ENCODE measurements at regions of chr14 and their contacts with region 1.

Region 1: DNA sequence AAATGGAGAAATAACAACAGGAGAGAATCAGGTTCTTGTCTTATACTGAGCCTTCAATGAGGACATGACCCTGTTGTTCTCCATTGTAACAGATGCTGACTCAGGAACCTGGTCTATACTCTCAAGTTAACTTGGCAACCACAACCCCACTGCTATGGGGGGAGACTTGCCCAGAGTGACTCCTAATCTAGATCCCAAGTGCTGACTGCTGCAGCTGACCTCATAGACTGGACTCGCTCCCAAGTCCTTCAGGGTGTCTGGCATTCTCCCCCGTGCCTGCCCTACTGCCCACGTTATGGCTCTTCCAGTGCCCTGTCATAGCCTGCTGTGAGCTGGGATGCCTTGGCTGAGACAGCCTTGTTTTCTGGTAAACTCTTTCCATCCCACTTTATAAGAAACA is 37.1 kb downstream of the NID2 start:
- DNase-seq: no peak

Region 2: DNA sequence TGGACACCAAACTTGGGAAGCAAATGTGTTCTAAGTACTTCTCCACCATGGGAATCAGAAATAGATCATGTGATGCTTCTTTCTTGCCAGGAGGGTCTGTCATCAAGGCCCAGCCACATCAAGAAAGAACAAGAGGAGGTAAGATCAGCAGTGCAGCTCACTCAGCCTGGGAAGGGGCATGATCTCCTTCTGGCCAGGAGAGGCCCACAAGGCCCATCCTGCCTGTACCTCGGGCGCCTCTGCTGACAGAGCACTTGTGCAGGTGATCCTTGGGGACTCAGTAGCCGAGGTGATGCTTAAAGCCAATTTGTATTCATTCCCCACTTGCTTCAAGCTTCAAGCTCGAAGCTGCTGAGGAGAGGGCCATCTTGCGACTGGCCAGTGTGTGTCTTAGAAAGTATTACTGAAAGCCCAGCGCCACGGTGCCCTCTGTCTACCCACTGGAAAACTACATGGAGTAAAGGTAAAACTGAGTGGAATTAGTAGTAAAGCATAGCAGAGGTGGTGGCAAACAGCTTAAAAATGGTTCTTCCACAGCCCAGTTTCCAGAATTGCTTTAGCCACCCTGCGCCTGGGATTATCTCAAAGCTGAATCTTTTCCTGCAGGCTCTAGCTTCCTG is 16.3 kb before region 1 on chr14:
- intact Hi-C with region 1: loop called (anchors 2 kb)
- DNase-seq: no peak

Region 3: DNA sequence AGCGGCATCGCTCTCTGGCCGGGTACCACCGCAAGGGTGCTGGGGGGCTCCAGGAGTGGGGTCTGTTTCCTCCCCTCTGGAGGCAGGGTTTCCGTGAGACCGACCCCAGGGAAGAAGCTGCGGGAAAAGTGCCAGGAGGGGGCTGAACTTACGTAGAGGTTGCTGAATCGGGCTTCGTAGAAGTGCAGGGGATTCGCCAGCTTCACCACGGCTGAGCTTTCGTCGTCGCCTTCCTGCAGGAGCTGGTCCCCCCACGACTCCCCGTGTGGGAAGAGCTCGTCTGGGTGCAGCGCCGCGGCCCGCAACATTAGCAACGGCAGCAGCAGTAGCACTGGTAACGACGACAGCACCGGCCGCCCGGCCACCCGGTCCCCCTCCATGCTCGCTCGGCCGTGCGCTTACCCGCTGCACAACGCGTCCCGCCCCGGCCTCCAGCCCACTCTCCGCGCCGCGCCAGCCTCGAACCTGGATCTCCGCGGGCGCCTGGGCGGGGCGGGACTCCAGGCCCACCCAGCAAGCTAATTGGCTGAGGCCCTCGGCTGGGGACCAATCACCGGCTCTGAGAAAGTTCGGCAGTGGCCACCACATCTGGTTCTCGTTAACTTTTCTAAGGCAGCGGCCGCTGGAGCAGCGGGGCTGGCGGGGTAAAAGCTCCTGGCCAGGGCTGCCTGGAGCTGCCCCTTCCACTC is 37.0 kb after region 1 on chr14 and contains the start of gene NID2:
- intact Hi-C with region 1: loop called (anchors 5 kb)
- DNase-seq: peak; percentile 93
- total RNA-seq, gene NID2: 37.3 TPM